B cell (primary cell): ENCODE measurements at regions of chr4 and their contacts with region 1.

Region 1: DNA sequence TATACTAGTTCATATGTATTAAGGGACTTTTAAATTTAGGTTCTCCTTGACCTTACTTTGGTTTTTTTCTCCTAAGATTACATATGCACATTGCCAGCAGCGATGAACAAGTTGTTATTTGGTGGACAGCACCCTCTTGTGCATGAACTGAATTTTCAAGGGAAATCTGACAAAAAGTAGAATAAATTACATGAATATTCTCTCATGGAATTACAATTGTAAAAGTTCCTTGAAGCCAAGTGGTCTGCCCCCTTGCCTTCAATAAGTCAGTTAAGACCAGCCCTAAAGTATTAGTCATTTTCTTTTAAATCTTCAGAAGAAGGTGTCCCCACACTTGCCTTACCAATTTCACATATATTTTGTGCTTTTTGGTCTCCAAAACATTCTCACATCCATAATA is 30.7 kb upstream of the SMARCA5 start:
- DNase-seq: peak; percentile 60
- ATAC-seq: no peak
- H3K4me3 ChIP-seq: no peak overlapping the region
- H3K4me3 Mint-ChIP-seq: no peak overlapping the region
- H3K27ac ChIP-seq: no peak overlapping the region
- H3K27ac Mint-ChIP-seq: no peak overlapping the region
- H3K4me1 ChIP-seq: no peaks in the 10 kb centered on the region
- H3K4me1 Mint-ChIP-seq: no peaks in the 10 kb centered on the region
- H3K27me3 ChIP-seq: no peaks in the 10 kb centered on the region
- H3K27me3 Mint-ChIP-seq: peaks cover 10% of the 10 kb centered on the region
- CTCF ChIP-seq: peak; percentile 78

Region 2: GRCh38 chr4:142917678-142918077 is 565.2 kb before region 1 on chr4:
- CTCF ChIA-PET with region 1: no interaction called
- POLR2A ChIA-PET with region 1: no interaction called
- intact Hi-C with region 1: no loop called
- DNase-seq: no peak
- ATAC-seq: no peak
- H3K4me3 ChIP-seq: no peak overlapping the region
- H3K4me3 Mint-ChIP-seq: no peak overlapping the region
- H3K27ac ChIP-seq: no peak overlapping the region
- H3K27ac Mint-ChIP-seq: no peak overlapping the region
- H3K4me1 ChIP-seq: no peaks in the 10 kb centered on the region
- H3K4me1 Mint-ChIP-seq: no peaks in the 10 kb centered on the region
- H3K27me3 ChIP-seq: no peaks in the 10 kb centered on the region
- H3K27me3 Mint-ChIP-seq: no peaks in the 10 kb centered on the region
- CTCF ChIP-seq: no peak

Region 3: DNA sequence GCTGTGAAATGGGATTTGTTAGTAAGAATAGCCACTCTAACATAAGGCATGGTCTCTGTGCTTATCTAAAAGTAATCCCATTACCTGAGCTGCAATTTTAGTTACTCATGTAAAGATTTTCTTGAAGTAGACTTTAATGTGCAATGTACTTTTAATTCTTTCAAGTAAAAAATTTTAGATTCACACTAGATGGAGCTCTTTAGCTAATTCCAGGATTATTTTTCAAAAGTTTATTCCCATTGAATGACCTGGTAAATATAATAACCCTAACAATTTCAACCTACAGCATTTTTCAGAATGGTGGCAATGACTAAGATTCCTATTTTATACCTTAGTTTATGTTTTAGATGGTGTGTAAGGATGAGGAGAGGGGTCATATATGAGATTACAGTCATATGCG is 280.0 kb before region 1 on chr4:
- CTCF ChIA-PET with region 1: no interaction called
- POLR2A ChIA-PET with region 1: no interaction called
- intact Hi-C with region 1: loop called (anchors 2 kb)
- DNase-seq: no peak
- ATAC-seq: no peak
- H3K4me3 ChIP-seq: no peak overlapping the region
- H3K4me3 Mint-ChIP-seq: no peak overlapping the region
- H3K27ac ChIP-seq: no peak overlapping the region
- H3K27ac Mint-ChIP-seq: no peak overlapping the region
- H3K4me1 ChIP-seq: no peaks in the 10 kb centered on the region
- H3K4me1 Mint-ChIP-seq: peaks cover 3% of the 10 kb centered on the region
- H3K27me3 ChIP-seq: no peaks in the 10 kb centered on the region
- H3K27me3 Mint-ChIP-seq: no peaks in the 10 kb centered on the region
- CTCF ChIP-seq: no peak

Region 4: DNA sequence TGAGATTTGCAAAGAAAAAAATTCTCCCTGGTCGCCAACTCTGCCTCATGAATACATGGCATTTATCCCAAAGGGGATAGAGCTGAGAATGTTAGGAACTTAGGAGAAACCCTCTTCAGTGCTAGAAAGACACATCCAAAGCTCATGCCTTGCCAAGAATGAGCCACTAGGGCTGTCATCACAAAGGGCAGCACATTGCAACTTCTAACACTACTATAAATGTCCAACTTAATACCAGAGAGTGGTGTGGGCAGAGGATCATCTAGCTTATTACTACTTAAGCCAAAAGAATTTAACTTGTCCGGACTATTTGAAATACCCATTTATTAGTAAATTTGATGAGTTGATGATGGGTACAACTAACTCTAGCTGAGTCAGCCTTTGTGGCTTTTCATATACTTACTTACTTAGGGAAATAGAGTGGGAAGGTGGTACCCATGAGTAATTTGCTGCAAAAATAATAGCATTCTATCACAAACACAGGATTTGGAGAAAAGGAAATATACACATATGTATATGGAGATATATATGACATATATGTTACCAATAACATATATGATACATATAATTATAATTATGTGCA is 212.5 kb before region 1 on chr4:
- CTCF ChIA-PET with region 1: no interaction called
- POLR2A ChIA-PET with region 1: no interaction called
- intact Hi-C with region 1: no loop called
- DNase-seq: no peak
- ATAC-seq: no peak
- H3K4me3 ChIP-seq: no peak overlapping the region
- H3K4me3 Mint-ChIP-seq: no peak overlapping the region
- H3K27ac ChIP-seq: no peak overlapping the region
- H3K27ac Mint-ChIP-seq: no peak overlapping the region
- H3K4me1 ChIP-seq: no peaks in the 10 kb centered on the region
- H3K4me1 Mint-ChIP-seq: no peaks in the 10 kb centered on the region
- H3K27me3 ChIP-seq: no peaks in the 10 kb centered on the region
- H3K27me3 Mint-ChIP-seq: peaks cover 12% of the 10 kb centered on the region
- CTCF ChIP-seq: no peak

Region 5: DNA sequence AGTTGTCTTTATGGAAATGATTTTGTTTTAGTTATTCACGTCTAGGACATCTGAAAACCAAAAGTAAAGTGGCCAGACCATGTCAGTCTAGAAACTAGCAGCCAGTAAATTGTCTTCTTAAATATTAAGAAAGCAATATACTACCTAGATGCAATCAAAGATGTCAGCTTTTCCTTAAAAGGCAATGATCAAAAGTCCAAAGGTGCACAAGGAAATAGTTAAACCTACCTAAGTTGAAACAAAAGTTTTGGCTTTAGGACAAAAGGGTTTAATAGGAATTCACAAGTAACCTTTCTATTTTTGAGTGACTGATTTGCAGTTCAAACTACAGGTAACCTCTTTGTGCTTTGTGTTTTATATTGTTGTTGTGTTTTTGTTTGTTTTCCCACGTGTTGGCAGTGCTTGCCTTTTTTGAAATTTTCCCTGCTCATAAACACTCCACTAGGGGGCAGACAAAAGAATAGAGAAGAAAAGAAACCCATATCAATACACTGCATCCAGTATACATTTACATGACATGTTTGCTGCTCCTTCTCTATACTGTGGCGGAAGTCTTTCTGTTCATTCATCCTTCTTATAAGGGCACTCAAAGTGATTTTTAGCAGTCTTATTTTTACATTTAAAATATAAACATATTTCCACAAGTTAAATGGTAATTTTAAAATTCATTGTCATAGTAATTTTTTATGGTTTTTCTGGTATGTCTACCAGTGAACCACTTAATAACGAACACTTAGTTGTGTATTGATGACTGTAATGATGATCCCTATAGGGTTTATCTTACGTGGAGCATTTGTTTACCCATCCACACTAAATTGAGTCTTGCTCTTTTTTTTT is 83.5 kb before region 1 on chr4:
- CTCF ChIA-PET with region 1: no interaction called
- POLR2A ChIA-PET with region 1: no interaction called
- intact Hi-C with region 1: loop called (anchors 1 kb)
- DNase-seq: peak; percentile 60
- ATAC-seq: peak; percentile 43
- H3K4me3 ChIP-seq: no peak overlapping the region
- H3K4me3 Mint-ChIP-seq: no peak overlapping the region
- H3K27ac ChIP-seq: no peak overlapping the region
- H3K27ac Mint-ChIP-seq: no peak overlapping the region
- H3K4me1 ChIP-seq: peaks cover 15 to 23% of the 10 kb centered on the region in 2 donors
- H3K4me1 Mint-ChIP-seq: peaks cover 23% of the 10 kb centered on the region
- H3K27me3 ChIP-seq: no peaks in the 10 kb centered on the region
- H3K27me3 Mint-ChIP-seq: peaks cover 6% of the 10 kb centered on the region
- CTCF ChIP-seq: peak; percentile 81

Region 6: GRCh38 chr4:143549928-143550327 is 67.1 kb after region 1 on chr4:
- CTCF ChIA-PET with region 1: no interaction called
- POLR2A ChIA-PET with region 1: no interaction called
- intact Hi-C with region 1: no loop called
- DNase-seq: no peak
- ATAC-seq: no peak
- H3K4me3 ChIP-seq: no peak overlapping the region
- H3K4me3 Mint-ChIP-seq: no peak overlapping the region
- H3K27ac ChIP-seq: no peak overlapping the region
- H3K27ac Mint-ChIP-seq: no peak overlapping the region
- H3K4me1 ChIP-seq: peaks cover 0 to 4% of the 10 kb centered on the region in 2 donors
- H3K4me1 Mint-ChIP-seq: peaks cover 6% of the 10 kb centered on the region
- H3K27me3 ChIP-seq: no peaks in the 10 kb centered on the region
- H3K27me3 Mint-ChIP-seq: no peaks in the 10 kb centered on the region
- CTCF ChIP-seq: no peak